ENCODE measurements at regions of chr11 and their contacts with region 1.

Region 1: DNA sequence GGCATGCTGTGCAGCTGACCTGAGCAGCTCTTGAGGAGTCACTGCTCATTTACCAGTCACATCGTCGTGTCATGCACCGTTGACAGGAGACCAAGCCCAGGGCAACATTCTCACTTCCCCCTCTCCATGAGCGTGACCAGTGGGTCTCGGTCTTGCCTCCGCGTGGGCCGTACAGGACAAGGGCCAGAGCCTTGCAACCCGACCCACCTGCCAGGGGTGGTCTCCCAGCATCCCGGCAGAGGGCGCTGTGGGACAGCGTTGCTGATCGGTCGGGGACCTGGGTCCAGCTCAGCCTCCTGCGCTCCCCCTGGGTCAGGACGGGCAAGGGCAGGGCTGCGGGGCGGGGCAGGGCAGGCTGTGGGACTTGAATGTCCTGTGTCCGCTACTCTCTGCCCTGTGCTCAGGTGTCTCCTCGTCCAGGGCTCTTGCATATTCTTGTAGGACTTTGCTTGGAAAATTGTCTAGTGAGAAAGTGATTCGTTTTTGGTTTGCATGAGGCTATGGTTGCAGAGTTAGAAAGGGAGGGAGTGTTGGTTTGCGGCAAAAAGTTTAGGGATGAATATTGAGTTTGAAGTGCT is 16.2 kb downstream of the EIF4G2 start:
- DNase-seq: peak; percentile 72 to 80 (median 76)
- H3K4me3 ChIP-seq: peak overlapping the region in 4 of 7 experiments; percentile 25 to 69 (median 40)
- H3K27ac ChIP-seq: no peak overlapping the region
- H3K4me1 ChIP-seq: peaks cover 0 to 15% (median 6%) of the 10 kb centered on the region in 4 experiments
- H3K27me3 ChIP-seq: peaks cover 0 to 4% (median 0%) of the 10 kb centered on the region in 5 experiments

Region 2: GRCh38 chr11:10770626-10771254 is 21.7 kb before region 1 on chr11:
- CTCF ChIA-PET with region 1: interaction called, 36 read pairs
- POLR2A ChIA-PET with region 1: interaction called, 3 read pairs
- DNase-seq: peak; percentile 31 to 48 (median 47)
- H3K4me3 ChIP-seq: no peak overlapping the region
- H3K27ac ChIP-seq: no peak overlapping the region
- H3K4me1 ChIP-seq: no peaks in the 10 kb centered on the region
- H3K27me3 ChIP-seq: no peaks in the 10 kb centered on the region

Region 3: GRCh38 chr11:10808553-10809372 is 16.3 kb after region 1 on chr11 and contains the start of gene EIF4G2:
- CTCF ChIA-PET with region 1: interaction called, 43 read pairs
- POLR2A ChIA-PET with region 1: interaction called, 4 read pairs
- DNase-seq: peak; percentile 98 to 100 (median 99)
- H3K4me3 ChIP-seq: peak within 1 kb of the TSS; percentile 84 to 100 (median 99)
- H3K27ac ChIP-seq: peak within 1 kb of the TSS; percentile 98 to 99
- H3K4me1 ChIP-seq: peaks cover 6 to 34% (median 20%) of the 10 kb centered on the region in 4 experiments
- H3K27me3 ChIP-seq: no peaks in the 10 kb centered on the region

Region 4: GRCh38 chr11:10841618-10842017 is 49.1 kb after region 1 on chr11:
- CTCF ChIA-PET with region 1: no interaction called
- POLR2A ChIA-PET with region 1: no interaction called
- DNase-seq: no peak
- H3K4me3 ChIP-seq: no peak overlapping the region
- H3K27ac ChIP-seq: no peak overlapping the region
- H3K4me1 ChIP-seq: no peaks in the 10 kb centered on the region
- H3K27me3 ChIP-seq: no peaks in the 10 kb centered on the region

Region 5: DNA sequence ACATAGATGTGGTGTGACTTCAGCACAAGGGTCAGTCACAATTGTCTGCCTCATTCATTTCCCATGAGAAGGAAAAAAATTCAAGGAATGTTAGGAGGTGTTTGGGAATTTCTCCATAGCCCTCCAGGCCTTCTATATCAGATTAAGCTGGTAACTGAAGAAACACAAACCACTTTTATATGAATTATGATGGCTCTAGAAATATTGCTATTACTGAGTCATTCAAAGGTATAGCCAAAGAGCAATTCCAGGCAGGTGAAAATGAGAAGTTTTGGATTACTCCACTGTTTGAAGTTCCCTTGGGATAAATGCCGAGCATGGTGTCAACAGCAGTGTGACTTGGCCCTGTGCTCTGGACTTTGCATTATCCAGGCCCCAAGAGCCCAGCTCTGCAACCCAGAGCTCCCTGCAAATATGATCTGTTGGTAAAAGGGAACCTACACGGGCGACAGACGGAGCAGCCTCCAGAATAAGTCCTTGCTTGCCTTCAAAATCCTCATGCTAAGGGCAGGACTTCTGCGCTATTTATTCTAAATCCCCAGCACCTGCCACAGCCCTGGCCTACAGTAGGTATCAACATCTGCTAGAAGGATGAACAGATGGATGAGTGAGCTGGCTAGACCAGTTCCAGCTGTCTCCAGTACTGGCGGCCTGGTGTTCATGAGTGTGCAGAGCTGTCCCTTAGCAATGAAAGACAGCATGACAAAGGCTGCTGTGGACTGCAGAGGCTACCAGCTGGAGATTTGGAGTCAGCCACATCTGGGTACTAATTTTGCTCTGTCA is 132.8 kb after region 1 on chr11:
- CTCF ChIA-PET with region 1: interaction called, 24 read pairs
- POLR2A ChIA-PET with region 1: no interaction called
- DNase-seq: no peak
- H3K4me3 ChIP-seq: no peak overlapping the region
- H3K27ac ChIP-seq: no peak overlapping the region
- H3K4me1 ChIP-seq: peaks cover under 1 to 7% (median 2%) of the 10 kb centered on the region in 4 experiments
- H3K27me3 ChIP-seq: peaks cover 3 to 16% (median 5%) of the 10 kb centered on the region in 5 experiments

Region 6: DNA sequence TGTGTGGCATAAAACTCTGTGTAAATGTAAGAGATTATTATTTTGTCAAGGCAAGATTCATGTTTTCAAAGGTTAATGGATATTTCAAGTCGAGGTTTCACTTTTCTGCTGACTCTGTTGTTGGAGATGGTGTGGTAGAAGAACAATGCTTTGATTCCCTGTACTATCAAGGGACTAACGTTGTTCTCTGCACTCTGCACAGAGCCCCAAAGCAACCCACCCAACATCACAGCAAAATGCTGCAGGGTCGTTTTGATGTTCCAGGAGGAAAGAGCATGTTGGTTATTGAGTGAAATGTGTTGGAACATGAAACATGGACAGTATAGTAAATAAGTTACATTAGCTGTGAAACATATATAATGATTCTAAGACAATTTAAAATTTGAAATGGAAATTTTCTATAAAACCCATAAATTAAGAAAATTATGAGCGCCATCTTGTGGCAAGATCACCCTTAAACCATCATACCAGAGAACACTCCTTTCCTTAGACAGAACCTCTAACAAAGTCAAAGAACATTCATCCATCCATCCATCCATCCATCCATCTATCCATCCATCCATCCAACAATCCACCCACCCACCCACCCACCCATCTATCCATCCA is 229.7 kb after region 1 on chr11:
- CTCF ChIA-PET with region 1: interaction called, 39 read pairs
- POLR2A ChIA-PET with region 1: no interaction called
- DNase-seq: peak in 2 of 3 donors; percentile 40 to 61
- H3K4me3 ChIP-seq: no peak overlapping the region
- H3K27ac ChIP-seq: no peak overlapping the region
- H3K4me1 ChIP-seq: no peaks in the 10 kb centered on the region
- H3K27me3 ChIP-seq: peaks cover 0 to 3% (median 0%) of the 10 kb centered on the region in 5 experiments

Measured in common myeloid progenitor, CD34-positive (primary cell).